ENCODE measurements at regions of chr2 and their contacts with region 1.

Region 1: GRCh38 chr2:48332286-48332685 is 197.7 kb upstream of the STON1 start:
- DNase-seq: peak; percentile 51
- H3K4me3 Mint-ChIP-seq: no peak overlapping the region
- H3K27ac Mint-ChIP-seq: no peak overlapping the region
- H3K4me1 Mint-ChIP-seq: peaks cover 11% of the 10 kb centered on the region
- H3K27me3 Mint-ChIP-seq: no peaks in the 10 kb centered on the region
- CTCF ChIP-seq: no peak

Region 2: GRCh38 chr2:48343571-48344440 is 11.5 kb after region 1 on chr2:
- CTCF ChIA-PET with region 1: interaction called, 6 read pairs
- POLR2A ChIA-PET with region 1: interaction called, 21 read pairs
- intact Hi-C with region 1: no loop called
- DNase-seq: peak; percentile 58
- H3K4me3 Mint-ChIP-seq: peak overlapping the region; percentile 79
- H3K27ac Mint-ChIP-seq: peak overlapping the region; percentile 95
- H3K4me1 Mint-ChIP-seq: peaks cover 28% of the 10 kb centered on the region
- H3K27me3 Mint-ChIP-seq: no peaks in the 10 kb centered on the region
- CTCF ChIP-seq: no peak

Measured in MCF 10A (cell line).